ENCODE measurements at regions of chr18 and their contacts with region 1.

Region 1: DNA sequence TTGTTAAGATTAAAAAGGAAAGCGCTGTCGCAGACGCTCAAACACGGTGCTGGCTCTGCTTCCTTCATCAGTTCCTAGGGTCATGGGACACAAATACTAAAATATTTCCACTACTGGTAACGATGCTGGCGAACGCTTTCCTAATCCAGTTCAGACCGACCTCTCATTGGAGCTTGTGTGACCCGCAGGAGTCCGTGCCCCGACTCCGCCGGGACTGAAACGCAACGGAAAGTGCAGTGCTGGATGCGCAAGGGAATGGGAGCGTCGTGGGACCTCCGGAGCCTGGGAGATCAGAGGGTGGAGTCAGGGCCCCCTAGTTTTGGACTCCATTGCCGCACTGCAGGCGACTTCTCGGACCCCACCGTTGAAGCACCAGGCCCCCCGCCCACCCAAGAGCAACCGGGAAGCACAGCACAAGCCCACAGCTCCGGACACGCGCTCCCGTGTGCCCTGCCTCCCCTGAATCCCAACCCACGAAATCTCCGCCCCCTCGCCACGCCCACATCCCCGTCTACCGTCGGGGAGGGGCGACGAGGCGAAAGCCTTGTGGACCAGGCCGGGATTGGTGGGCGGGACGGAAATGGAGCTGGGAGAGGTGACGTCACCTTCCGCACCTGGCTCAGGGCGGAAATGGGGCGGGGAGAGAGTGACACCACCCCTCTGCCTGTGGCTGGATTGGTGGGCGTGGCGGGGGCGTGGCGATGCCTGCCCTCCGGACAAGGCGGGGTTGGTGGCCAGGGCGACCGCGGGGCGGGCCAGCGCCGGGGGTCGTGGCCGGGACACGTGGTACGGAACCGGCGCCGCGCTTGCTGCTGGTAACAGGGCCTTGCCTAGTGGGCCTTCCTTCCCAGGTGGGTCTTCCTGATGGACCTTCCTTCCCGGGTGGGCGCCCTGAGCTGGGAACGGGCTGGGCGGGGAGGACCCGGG is at the start of gene CNDP2:
- DNase-seq: peak; percentile 100
- ATAC-seq: peak; percentile 96 to 97 (median 96)
- H3K4me3 ChIP-seq: peak within 1 kb of the TSS; percentile 64 to 99 (median 90)
- H3K27ac ChIP-seq: peak within 1 kb of the TSS; percentile 79 to 97 (median 94)
- H3K4me1 ChIP-seq: peaks cover 0 to 42% (median 25%) of the 10 kb centered on the region in 12 donors
- H3K27me3 ChIP-seq: no peaks in the 10 kb centered on the region
- CTCF ChIP-seq: no peak
- POLR2A ChIP-seq: peak in 1 of 2 donors; percentile 81
- total RNA-seq, gene CNDP2: 38.3 to 162 (median 76.3) TPM

Region 2: DNA sequence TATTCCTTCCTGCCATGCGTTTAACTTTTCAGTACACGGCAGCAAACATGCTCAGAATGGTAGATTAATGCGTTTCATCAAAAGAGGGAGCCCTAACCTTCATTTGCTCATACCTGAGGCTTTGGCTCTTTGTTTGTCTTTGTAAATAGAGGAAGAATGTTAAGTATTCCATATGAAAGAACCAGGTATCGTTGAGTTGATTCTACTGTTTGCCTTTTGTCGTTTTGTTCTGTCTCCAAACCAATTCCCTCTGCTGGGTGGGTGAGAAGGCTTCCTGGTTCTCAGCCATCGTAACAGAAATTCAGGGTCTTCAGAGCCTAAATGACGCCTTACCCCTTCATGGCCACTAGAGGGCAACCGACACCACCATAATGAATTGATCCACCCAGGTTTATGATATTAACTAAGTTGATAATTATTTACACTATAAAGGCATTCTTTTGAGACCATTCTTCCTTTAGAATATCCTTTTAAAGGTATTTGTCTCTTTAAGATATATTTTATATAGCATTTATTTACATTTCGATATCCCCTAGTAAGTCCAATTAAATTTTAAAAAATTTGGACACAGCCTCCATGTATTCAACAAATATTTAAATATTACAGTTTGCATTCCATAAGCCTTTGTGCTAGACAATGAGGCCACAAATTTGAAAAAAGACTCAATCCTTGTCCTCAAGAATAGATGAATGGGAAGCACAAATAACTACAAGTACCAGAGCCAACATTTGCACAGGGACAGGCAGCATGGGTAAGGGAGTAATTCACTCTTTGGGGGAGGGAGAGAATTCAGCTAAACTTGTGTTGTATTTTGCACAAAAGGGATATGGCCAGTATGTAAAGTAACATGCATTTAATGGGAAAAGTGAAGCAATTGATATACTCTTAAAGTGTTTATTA is 299.4 kb before region 1 on chr18:
- intact Hi-C with region 1: loop called in 2 of 10 experiments (anchors 5 to 10 kb)
- DNase-seq: peak in 2 of 5 donors; percentile 20 to 30
- ATAC-seq: peak in 3 of 4 donors; percentile 64 to 87 (median 65)
- H3K4me3 ChIP-seq: peak overlapping the region in 7 of 12 donors; percentile 1 to 35 (median 25)
- H3K27ac ChIP-seq: no peak overlapping the region
- H3K4me1 ChIP-seq: peaks cover 0 to 12% (median 0%) of the 10 kb centered on the region in 12 donors
- H3K27me3 ChIP-seq: peaks cover 0 to 15% (median 0%) of the 10 kb centered on the region in 9 donors
- CTCF ChIP-seq: peak; percentile 87 to 95 (median 90)
- POLR2A ChIP-seq: no peak

Region 3: GRCh38 chr18:74398981-74399887 is 96.6 kb before region 1 on chr18:
- intact Hi-C with region 1: no loop called
- DNase-seq: peak in 3 of 5 donors; percentile 39 to 57 (median 40)
- ATAC-seq: peak in 3 of 4 donors; percentile 55 to 75 (median 66)
- H3K4me3 ChIP-seq: peak overlapping the region in 5 of 12 donors; percentile 3 to 22 (median 12)
- H3K27ac ChIP-seq: peak overlapping the region in 9 of 12 donors; percentile 8 to 55 (median 27)
- H3K4me1 ChIP-seq: peaks cover 0 to 45% (median 15%) of the 10 kb centered on the region in 12 donors
- H3K27me3 ChIP-seq: no peaks in the 10 kb centered on the region
- CTCF ChIP-seq: no peak
- POLR2A ChIP-seq: no peak

Region 4: GRCh38 chr18:74450626-74451025 is 45.2 kb before region 1 on chr18:
- intact Hi-C with region 1: loop called in 2 of 10 experiments (anchors 5 kb)
- DNase-seq: peak in 4 of 5 donors; percentile 26 to 71 (median 48)
- ATAC-seq: peak; percentile 72 to 85 (median 76)
- H3K4me3 ChIP-seq: no peak overlapping the region
- H3K27ac ChIP-seq: peak overlapping the region in 10 of 12 donors; percentile 31 to 73 (median 62)
- H3K4me1 ChIP-seq: peaks cover 0 to 53% (median 31%) of the 10 kb centered on the region in 12 donors
- H3K27me3 ChIP-seq: peaks cover 0 to 23% (median 2%) of the 10 kb centered on the region in 9 donors
- CTCF ChIP-seq: peak in 1 of 12 donors; percentile 8
- POLR2A ChIP-seq: no peak

Region 5: DNA sequence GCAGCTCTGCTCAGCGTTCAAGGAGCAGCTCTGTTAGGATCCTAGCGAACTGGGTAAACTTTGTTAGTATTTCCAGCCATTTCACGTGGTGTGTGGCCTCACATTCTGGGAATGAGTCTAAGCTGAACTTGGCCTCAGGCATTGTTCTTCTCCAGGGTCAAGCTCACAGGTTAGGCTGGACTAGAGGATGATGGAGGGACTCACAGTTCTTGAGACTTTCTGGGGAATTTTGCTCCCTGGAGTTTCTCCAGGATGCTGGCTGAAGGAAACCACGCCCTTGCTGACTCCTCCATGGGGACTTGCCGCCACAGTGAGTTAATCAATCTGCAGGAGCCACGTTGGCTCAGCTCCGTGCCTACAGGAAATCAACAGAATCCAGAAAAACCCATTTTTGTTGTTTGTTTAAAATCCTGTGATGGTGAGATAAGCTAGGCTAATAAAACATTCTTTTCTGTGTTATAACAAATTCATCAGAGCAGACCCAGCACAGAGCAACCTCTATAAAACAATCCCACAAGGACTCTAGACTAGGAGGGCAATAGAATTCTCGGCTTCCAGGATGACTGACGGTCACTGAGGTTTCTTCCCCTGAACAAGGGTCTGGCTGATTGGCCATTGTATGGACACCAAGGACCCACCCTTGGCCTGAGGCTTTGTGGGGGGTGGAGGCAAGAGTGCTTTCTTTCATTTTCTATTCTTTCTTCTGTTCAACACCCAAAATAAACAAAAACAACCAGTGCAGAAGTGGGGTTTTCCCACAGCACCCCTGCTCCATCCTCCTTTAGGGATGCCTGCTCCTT is 51.1 kb after region 1 on chr18:
- intact Hi-C with region 1: loop called in 8 of 10 experiments (anchors 1 to 5 kb)
- DNase-seq: peak in 4 of 5 donors; percentile 68 to 77 (median 73)
- ATAC-seq: peak; percentile 47 to 86 (median 78)
- H3K4me3 ChIP-seq: no peak overlapping the region
- H3K27ac ChIP-seq: peak overlapping the region; percentile 70 to 92 (median 82)
- H3K4me1 ChIP-seq: peaks cover 6 to 45% (median 27%) of the 10 kb centered on the region in 12 donors
- H3K27me3 ChIP-seq: no peaks in the 10 kb centered on the region
- CTCF ChIP-seq: no peak
- POLR2A ChIP-seq: no peak

Region 6: DNA sequence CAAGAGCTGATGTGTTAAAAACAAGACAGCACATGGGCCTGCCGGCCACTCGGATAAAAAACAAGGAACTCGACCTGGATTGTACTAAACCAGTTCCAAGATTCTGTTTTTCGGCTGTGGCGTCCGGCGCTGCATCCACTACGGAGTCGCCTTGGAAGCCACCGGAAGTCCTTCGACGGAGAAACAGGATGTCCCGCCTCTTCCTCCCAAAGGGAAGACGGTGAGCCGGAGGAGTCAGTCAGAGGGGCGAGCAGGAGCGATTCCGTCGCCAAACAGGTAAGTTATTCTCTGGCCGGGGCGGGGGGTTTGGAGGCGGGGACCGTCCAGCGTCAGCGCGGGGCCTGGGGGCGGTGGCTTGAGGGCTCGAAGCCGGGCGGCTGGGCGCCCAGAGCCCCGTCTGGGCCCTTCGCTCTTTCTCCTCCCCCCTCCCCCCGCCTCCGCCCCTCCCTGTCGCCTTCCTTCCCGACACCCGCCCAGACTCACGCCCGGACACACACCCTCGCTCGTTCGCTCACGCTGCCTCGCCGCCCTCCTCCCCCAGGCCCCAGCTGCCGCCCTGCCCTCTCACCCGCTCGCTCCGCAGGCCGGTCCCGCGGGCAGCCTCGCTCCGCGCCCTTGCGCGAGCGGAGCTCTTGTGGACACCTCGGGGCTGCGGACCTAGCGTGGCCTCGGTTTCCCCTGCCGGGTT is 102.0 kb after region 1 on chr18 and contains the start of gene ZNF407:
- intact Hi-C with region 1: loop called in 4 of 10 experiments (anchors 1 to 5 kb)
- DNase-seq: peak; percentile 90 to 91 (median 90)
- ATAC-seq: peak; percentile 89 to 95 (median 93)
- H3K4me3 ChIP-seq: peak within 1 kb of the TSS; percentile 66 to 96 (median 86)
- H3K27ac ChIP-seq: peak within 1 kb of the TSS; percentile 93 to 99 (median 98)
- H3K4me1 ChIP-seq: peaks cover 3 to 38% (median 27%) of the 10 kb centered on the region in 12 donors
- H3K27me3 ChIP-seq: no peaks in the 10 kb centered on the region
- CTCF ChIP-seq: no peak
- POLR2A ChIP-seq: no peak
- total RNA-seq, gene ZNF407: 8.1 to 14.7 (median 12.3) TPM

Measured in heart left ventricle (tissue), 16 donors.